ENCODE measurements at regions of chr1 and their contacts with region 1.

Region 1: DNA sequence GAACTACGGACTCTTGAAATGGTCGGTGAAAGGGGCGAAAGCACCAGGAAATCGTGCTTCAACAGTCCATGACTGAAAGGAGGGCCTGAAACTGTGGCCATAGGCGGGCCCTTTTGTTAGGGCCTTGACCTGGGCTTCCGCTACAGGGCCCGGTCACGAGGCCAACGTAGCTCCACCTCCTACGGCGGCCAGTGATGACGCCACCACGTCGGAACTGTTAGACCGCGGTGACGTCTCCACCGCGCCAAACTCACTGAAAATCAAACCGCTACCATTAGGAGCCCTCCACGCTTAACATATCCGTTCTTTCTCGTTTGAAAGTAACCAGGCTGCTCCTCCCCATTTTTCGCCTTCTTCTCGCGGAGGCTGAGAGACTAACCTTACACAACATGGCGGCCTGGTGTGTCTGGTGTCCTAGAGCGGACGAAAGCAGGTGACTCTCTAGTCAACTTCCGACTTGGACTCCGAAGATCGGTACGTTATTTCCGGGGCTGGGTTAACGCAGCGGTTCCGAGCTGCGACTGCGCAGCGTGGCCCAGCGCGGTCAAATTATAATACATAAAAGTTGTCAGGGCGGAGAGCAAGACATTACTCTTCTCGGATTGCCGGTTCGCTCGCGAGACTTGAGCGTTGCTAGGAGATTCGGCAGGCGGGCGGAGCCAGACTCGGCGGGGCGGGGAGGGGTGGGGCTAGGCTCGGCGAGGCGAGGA is 376 bp upstream of the CACYBP start:
- DNase-seq: peak; percentile 97 to 99 (median 98)
- ATAC-seq: peak; percentile 76 to 79
- H3K4me3 Mint-ChIP-seq: no peak overlapping the region
- H3K27ac Mint-ChIP-seq: no peak overlapping the region
- H3K4me1 Mint-ChIP-seq: peaks cover 21 to 48% (median 38%) of the 10 kb centered on the region in 4 donors
- H3K27me3 Mint-ChIP-seq: no peaks in the 10 kb centered on the region

Region 2: GRCh38 chr1:174800216-174800851 is 199.0 kb before region 1 on chr1:
- POLR2A ChIA-PET with region 1: interaction called, 45 read pairs
- DNase-seq: peak in 3 of 10 donors; percentile 3 to 19 (median 4)
- ATAC-seq: peak; percentile 4 to 15
- H3K4me3 Mint-ChIP-seq: no peak overlapping the region
- H3K27ac Mint-ChIP-seq: no peak overlapping the region
- H3K4me1 Mint-ChIP-seq: peaks cover 3 to 20% (median 8%) of the 10 kb centered on the region in 4 donors
- H3K27me3 Mint-ChIP-seq: no peaks in the 10 kb centered on the region

Region 3: DNA sequence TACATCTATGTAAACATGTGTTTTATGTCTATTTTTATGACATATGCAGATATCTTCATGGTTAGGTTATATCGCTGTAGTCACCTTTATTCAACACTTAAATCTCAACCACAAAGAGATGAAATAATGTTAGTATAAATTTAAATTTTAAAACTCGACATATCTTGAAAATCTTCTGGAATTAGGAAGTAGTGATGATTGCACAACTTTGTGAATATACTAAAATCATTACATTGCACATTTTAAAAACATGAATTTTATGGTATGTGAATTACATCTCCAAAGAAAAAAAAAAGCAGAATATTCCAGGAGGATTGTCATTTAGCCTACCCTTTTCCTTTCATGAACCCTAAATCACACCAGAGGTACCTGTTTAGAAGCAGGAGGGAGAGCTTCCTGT is 39.0 kb before region 1 on chr1:
- POLR2A ChIA-PET with region 1: interaction called, 204 read pairs
- DNase-seq: no peak
- ATAC-seq: no peak
- H3K4me3 Mint-ChIP-seq: no peak overlapping the region
- H3K27ac Mint-ChIP-seq: peak overlapping the region in 3 of 10 donors; percentile 33 to 47 (median 43)
- H3K4me1 Mint-ChIP-seq: peaks cover 15 to 50% (median 37%) of the 10 kb centered on the region in 4 donors
- H3K27me3 Mint-ChIP-seq: no peaks in the 10 kb centered on the region

Region 4: GRCh38 chr1:174982971-174983689 is 16.2 kb before region 1 on chr1:
- POLR2A ChIA-PET with region 1: interaction called, 19 read pairs
- DNase-seq: peak in 8 of 10 donors; percentile 28 to 68 (median 53)
- ATAC-seq: peak in 1 of 2 donors; percentile 49
- H3K4me3 Mint-ChIP-seq: no peak overlapping the region
- H3K27ac Mint-ChIP-seq: peak overlapping the region in 8 of 10 donors; percentile 8 to 75 (median 42)
- H3K4me1 Mint-ChIP-seq: peaks cover 9 to 31% (median 28%) of the 10 kb centered on the region in 4 donors
- H3K27me3 Mint-ChIP-seq: no peaks in the 10 kb centered on the region

Region 5: DNA sequence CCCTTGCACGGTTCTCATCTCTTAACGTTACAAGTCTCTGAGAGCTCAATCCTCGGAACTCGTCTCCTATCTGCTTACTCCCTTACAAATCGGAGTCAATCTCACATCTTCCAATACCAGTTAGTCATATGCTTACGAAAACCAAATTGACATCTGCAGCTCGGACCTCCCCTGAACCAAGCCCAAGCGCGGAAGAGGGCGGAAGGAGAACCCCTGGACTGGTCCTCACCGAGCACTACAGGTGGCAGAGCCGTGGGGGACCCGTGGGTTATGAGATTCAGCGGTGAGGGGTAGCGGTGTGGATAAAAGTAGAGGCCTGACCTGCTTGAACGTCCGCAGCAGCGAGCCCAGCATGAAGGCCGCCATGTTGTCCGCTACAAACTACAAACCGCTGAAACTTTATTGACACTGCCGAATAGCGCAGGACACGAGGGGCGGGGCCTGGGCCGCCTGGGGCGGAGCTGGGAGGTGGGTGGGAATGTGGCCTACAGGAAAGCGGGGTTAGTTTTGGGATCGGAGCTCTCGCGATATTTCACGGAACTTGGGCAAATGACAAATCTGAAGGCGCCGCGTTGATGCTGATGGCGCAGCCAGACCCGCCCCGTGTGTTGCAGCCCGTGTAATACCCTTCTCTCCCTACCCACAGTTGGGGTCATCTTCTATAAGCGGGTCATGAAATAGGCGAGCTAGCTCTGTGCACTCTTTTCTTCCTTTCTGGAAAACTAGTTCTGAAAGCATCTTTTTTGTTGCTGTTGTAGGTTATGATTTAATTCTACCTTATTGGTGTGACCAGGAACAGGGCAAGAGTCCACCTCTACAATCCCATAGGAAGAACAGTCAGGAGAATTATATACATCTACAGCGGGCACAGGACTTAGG is 23.9 kb after region 1 on chr1 and contains the start of gene MRPS14:
- POLR2A ChIA-PET with region 1: interaction called, 180 read pairs
- DNase-seq: peak; percentile 94 to 99 (median 97)
- ATAC-seq: peak; percentile 92 to 93
- H3K4me3 Mint-ChIP-seq: peak within 1 kb of the TSS; percentile 87 to 98 (median 92)
- H3K27ac Mint-ChIP-seq: peak within 1 kb of the TSS; percentile 92 to 100 (median 96)
- H3K4me1 Mint-ChIP-seq: peaks cover 24 to 39% (median 32%) of the 10 kb centered on the region in 4 donors
- H3K27me3 Mint-ChIP-seq: no peaks in the 10 kb centered on the region
- polyA plus RNA-seq, gene MRPS14: 44.8 to 55.4 (median 45.7) TPM

Measured in naive thymus-derived CD8-positive, alpha-beta T cell (primary cell).